ENCODE measurements at regions of chr3 and their contacts with region 1.

Region 1: GRCh38 chr3:196528639-196529233 is 13.6 kb upstream of the SMCO1 start:
- DNase-seq: peak; percentile 90
- H3K4me3 Mint-ChIP-seq: peak overlapping the region; percentile 73
- H3K27ac Mint-ChIP-seq: peak overlapping the region; percentile 85
- H3K4me1 Mint-ChIP-seq: peaks cover 22% of the 10 kb centered on the region
- H3K27me3 Mint-ChIP-seq: no peaks in the 10 kb centered on the region

Region 2: GRCh38 chr3:196378146-196378841 is 150.4 kb before region 1 on chr3:
- CTCF ChIA-PET with region 1: no interaction called
- POLR2A ChIA-PET with region 1: no interaction called
- DNase-seq: peak; percentile 39
- H3K4me3 Mint-ChIP-seq: no peak overlapping the region
- H3K27ac Mint-ChIP-seq: no peak overlapping the region
- H3K4me1 Mint-ChIP-seq: peaks cover 7% of the 10 kb centered on the region
- H3K27me3 Mint-ChIP-seq: no peaks in the 10 kb centered on the region

Region 3: DNA sequence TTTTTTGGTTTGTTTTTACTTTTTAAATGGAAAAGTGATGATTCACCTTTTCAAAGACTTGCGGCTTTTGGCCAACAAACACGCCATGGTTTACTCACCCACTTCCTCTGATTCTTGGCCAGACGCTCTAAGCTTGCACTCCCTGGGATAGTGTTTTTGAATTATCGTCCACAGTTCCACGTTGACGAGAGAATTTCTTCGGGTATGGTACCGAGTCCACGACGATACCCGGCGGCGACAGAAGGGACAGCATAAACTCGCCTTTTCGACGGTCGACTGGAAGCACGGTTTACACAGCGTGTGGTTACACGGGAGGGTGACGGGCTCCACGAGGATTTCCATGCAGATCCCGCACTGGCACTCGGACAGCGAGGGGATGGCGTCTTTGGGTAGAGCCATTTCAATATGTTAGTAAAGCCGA is 26.0 kb before region 1 on chr3:
- CTCF ChIA-PET with region 1: interaction called, 9 read pairs
- POLR2A ChIA-PET with region 1: interaction called, 42 read pairs
- DNase-seq: peak; percentile 78
- H3K4me3 Mint-ChIP-seq: peak overlapping the region; percentile 100
- H3K27ac Mint-ChIP-seq: peak overlapping the region; percentile 99
- H3K4me1 Mint-ChIP-seq: peaks cover 37% of the 10 kb centered on the region
- H3K27me3 Mint-ChIP-seq: peaks cover 3% of the 10 kb centered on the region

Region 4: GRCh38 chr3:196568246-196569002 is 39.7 kb after region 1 on chr3 and contains the starts of genes FBXO45 and WDR53:
- CTCF ChIA-PET with region 1: interaction called, 24 read pairs
- POLR2A ChIA-PET with region 1: interaction called, 28 read pairs
- DNase-seq: peak; percentile 97
- H3K4me3 Mint-ChIP-seq: peak within 1 kb of the TSS; percentile 97
- H3K27ac Mint-ChIP-seq: peak within 1 kb of the TSS; percentile 95
- H3K4me1 Mint-ChIP-seq: peaks cover 54% of the 10 kb centered on the region
- H3K27me3 Mint-ChIP-seq: no peaks in the 10 kb centered on the region
- total RNA-seq, gene FBXO45: 19.7 TPM
- total RNA-seq, gene WDR53: 27.2 to 29.3 TPM

Region 5: GRCh38 chr3:196632046-196632751 is 103.5 kb after region 1 on chr3:
- CTCF ChIA-PET with region 1: interaction called, 10 read pairs
- POLR2A ChIA-PET with region 1: interaction called, 7 read pairs
- DNase-seq: peak; percentile 97
- H3K4me3 Mint-ChIP-seq: peak overlapping the region; percentile 97
- H3K27ac Mint-ChIP-seq: peak overlapping the region; percentile 98
- H3K4me1 Mint-ChIP-seq: peaks cover 65% of the 10 kb centered on the region
- H3K27me3 Mint-ChIP-seq: no peaks in the 10 kb centered on the region

Region 6: DNA sequence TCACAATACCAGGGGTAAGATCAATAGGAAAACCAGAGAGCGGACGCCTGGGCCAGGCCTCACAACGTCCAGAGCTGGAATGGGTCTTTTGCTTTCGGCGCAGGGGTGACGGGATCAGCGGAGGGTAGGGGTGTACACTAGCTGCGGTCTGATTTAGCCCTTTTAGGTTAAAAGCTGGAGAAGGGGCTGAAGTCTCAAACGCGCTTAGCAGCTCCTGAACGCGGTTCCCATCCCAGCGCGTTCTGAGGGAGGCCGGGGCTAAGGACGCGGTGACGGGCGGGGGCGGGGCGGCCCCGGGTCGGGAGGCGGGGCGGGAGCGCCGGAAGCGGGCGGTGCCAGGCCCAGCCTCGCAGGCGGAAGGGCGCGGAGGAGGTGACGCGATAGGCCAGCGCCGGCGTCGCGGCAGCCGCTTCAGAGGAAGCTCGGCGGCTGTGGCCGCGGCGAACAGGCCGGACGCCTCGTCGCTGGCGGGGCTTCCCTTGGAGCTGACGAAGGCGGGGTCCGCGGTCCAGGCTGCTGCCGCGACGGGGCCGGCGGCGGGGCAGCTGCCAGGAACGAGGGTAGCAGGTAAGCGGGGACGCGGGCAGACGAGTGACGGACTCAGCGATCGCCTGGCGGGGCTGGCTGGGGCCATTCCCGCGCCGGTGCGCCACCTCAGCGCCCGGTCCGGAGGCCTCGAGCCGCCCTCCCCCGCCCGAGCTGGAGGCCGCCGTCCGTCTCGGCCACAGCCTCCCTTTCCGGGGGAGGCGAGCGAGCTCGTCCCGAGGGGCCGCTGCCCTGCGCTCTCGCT is 339.0 kb after region 1 on chr3 and contains the start of gene SENP5:
- CTCF ChIA-PET with region 1: interaction called, 6 read pairs
- POLR2A ChIA-PET with region 1: interaction called, 11 read pairs
- DNase-seq: peak; percentile 93
- H3K4me3 Mint-ChIP-seq: peak within 1 kb of the TSS; percentile 93
- H3K27ac Mint-ChIP-seq: peak within 1 kb of the TSS; percentile 91
- H3K4me1 Mint-ChIP-seq: peaks cover 24% of the 10 kb centered on the region
- H3K27me3 Mint-ChIP-seq: no peaks in the 10 kb centered on the region
- total RNA-seq, gene SENP5: 37.9 to 42.3 TPM